PC-9 (cell line): ENCODE measurements at regions of chr10 and their contacts with region 1.

Region 1: DNA sequence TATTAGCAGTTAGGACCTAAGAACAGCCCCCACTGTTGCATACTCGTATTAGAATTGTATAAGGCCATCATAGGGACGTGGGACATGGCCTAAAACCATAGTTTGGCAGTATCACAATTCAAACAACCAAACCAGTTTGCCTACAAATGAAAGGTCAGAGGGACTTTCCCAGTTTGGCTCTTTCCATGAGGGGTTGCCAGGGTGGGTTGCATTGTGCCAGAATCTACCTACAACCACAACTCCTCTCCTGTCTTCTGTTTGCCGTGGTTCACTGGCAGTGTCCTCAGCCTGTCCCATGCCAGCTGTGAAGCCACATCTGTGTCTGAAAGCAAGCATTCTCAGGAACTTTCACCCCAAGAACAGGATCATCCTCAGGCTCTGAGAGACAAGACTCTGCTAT is 44.5 kb downstream of the PIK3AP1 start:
- DNase-seq: no peak
- H3K4me3 ChIP-seq: no peak overlapping the region
- H3K27ac ChIP-seq: no peak overlapping the region
- H3K4me1 ChIP-seq: peaks cover 28% of the 10 kb centered on the region
- H3K27me3 ChIP-seq: no peaks in the 10 kb centered on the region
- CTCF ChIP-seq: no peak

Region 2: DNA sequence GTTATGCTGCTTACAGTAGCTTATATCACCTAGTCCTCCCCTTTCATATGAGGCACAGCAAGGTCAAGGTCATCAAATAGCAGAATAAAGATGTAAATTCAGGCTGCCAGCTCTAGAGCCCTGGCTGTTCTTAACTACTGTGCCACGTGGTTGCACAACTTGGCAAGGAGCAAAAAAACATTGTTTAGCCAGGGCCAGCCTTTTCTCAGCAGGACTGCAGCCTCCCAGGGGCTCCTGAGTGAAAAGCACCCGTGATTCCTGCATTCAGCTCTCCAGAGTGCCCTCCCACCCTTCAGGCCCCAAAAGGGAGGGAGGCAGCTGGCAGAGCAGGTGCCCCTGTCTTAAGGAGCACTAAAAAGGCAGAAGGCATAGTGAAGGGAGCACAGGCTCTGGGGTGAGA is 57.2 kb before region 1 on chr10:
- CTCF ChIA-PET with region 1: no interaction called
- POLR2A ChIA-PET with region 1: interaction called, 27 read pairs
- intact Hi-C with region 1: no loop called
- DNase-seq: no peak
- H3K4me3 ChIP-seq: no peak overlapping the region
- H3K27ac ChIP-seq: no peak overlapping the region
- H3K4me1 ChIP-seq: no peaks in the 10 kb centered on the region; the same call in 1 of the 2 replicates
- H3K27me3 ChIP-seq: no peaks in the 10 kb centered on the region
- CTCF ChIP-seq: no peak